Activated naive CD4-positive, alpha-beta T cell treated with anti-CD3 and anti-CD28 coated beads for 36 hours (primary cell): ENCODE measurements at regions of chr4 and their contacts with region 1.

Region 1: DNA sequence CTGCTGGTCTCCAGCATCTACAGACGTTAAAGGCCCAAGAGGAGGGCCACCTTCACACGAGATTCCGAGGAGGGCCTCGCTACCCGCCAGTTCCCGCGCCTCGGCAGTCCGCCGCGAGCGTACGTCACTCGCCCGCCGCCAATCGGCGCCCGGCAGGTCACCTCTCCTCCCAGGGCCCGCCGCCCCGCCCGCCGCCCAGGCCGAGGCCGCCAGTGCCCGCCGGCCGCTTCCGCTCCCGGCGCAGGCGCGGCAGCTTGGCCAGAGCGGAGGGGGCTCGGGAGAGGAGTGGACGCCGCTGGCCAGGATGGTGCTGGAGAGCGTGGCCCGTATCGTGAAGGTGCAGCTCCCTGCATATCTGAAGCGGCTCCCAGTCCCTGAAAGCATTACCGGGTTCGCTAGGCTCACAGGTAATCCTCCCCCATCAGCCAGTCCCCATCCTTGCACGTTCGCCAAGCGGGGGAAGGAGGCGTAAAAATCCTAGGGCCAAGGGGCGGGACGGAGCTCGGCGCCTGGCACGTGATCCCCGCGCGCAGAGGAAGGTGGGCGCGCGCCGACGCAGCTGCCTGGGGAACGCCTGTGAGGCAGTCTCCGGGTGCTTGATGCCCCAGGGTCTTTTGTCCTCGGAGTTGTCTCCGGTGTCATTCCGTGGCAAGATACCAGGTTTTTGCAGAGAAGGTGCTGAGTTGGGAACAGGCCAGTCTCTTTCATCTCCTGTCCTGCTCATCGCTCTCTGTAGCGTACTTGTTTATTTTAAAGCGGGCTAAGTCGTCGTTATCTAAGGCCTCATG is at the start of gene CISD2:
- DNase-seq: peak; percentile 95
- H3K4me3 Mint-ChIP-seq: peak within 1 kb of the TSS; percentile 94
- H3K27ac Mint-ChIP-seq: peak within 1 kb of the TSS; percentile 97
- H3K4me1 Mint-ChIP-seq: peaks cover 51% of the 10 kb centered on the region
- H3K27me3 Mint-ChIP-seq: no peaks in the 10 kb centered on the region
- total RNA-seq, gene CISD2: 25.1 to 25.7 TPM

Region 2: GRCh38 chr4:102627831-102628523 is 241.0 kb before region 1 on chr4:
- CTCF ChIA-PET with region 1: no interaction called
- intact Hi-C with region 1: loop called (anchors 2 kb)
- DNase-seq: peak; percentile 62
- H3K4me3 Mint-ChIP-seq: peak overlapping the region; percentile 22
- H3K27ac Mint-ChIP-seq: peak overlapping the region; percentile 54
- H3K4me1 Mint-ChIP-seq: peaks cover 75% of the 10 kb centered on the region
- H3K27me3 Mint-ChIP-seq: no peaks in the 10 kb centered on the region

Region 3: DNA sequence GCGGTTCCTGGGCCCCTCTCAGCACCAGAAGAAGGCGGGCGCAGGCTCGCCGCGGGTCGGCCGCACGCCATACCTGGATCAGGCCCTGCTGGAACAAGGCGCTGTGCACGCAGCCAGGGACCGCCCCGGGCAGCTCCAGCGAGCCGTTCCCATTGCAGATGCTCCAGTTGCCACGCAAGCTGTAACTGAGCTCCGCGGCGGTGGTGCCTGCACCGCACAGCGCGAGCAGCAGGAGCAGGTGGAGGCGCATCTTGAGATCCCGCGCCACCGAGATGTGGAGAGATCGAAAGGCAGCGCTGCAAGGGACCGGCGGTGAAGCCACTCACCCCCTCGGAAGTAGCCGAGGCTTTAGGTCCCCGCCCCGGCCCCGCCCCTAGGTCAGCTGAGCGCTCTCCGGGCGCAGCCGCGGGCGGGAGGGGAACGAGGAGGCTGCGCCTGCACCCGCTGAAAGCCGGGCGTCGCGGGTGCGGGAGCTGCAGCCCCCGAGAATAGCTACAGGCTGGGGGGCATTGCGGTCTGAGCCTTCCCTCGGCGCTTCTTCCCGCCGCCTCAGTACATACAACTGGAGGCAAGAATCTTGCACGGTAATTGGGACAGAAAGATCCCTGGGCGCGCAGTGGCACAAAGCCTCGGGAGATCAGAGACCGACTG is 108.2 kb before region 1 on chr4 and contains the start of gene MANBA:
- CTCF ChIA-PET with region 1: no interaction called
- intact Hi-C with region 1: loop called (anchors 1 kb)
- DNase-seq: peak; percentile 89
- H3K4me3 Mint-ChIP-seq: peak within 1 kb of the TSS; percentile 88
- H3K27ac Mint-ChIP-seq: peak within 1 kb of the TSS; percentile 36
- H3K4me1 Mint-ChIP-seq: peaks cover 27% of the 10 kb centered on the region
- H3K27me3 Mint-ChIP-seq: no peaks in the 10 kb centered on the region
- total RNA-seq, gene MANBA: 9.8 to 11.0 TPM

Region 4: GRCh38 chr4:102988429-102989020 is 119.5 kb after region 1 on chr4:
- CTCF ChIA-PET with region 1: no interaction called
- intact Hi-C with region 1: loop called (anchors 1 kb)
- DNase-seq: no peak
- H3K4me3 Mint-ChIP-seq: peak overlapping the region; percentile 4
- H3K27ac Mint-ChIP-seq: peak overlapping the region; percentile 65
- H3K4me1 Mint-ChIP-seq: peaks cover 21% of the 10 kb centered on the region
- H3K27me3 Mint-ChIP-seq: no peaks in the 10 kb centered on the region

Region 5: GRCh38 chr4:103019308-103020124 is 150.5 kb after region 1 on chr4 and contains the start of gene SLC9B1:
- CTCF ChIA-PET with region 1: no interaction called
- intact Hi-C with region 1: loop called (anchors 1 kb)
- DNase-seq: peak; percentile 96
- H3K4me3 Mint-ChIP-seq: peak within 1 kb of the TSS; percentile 96
- H3K27ac Mint-ChIP-seq: peak within 1 kb of the TSS; percentile 97
- H3K4me1 Mint-ChIP-seq: peaks cover 20% of the 10 kb centered on the region
- H3K27me3 Mint-ChIP-seq: no peaks in the 10 kb centered on the region
- total RNA-seq, gene SLC9B1: 2.0 to 3.5 TPM

Region 6: DNA sequence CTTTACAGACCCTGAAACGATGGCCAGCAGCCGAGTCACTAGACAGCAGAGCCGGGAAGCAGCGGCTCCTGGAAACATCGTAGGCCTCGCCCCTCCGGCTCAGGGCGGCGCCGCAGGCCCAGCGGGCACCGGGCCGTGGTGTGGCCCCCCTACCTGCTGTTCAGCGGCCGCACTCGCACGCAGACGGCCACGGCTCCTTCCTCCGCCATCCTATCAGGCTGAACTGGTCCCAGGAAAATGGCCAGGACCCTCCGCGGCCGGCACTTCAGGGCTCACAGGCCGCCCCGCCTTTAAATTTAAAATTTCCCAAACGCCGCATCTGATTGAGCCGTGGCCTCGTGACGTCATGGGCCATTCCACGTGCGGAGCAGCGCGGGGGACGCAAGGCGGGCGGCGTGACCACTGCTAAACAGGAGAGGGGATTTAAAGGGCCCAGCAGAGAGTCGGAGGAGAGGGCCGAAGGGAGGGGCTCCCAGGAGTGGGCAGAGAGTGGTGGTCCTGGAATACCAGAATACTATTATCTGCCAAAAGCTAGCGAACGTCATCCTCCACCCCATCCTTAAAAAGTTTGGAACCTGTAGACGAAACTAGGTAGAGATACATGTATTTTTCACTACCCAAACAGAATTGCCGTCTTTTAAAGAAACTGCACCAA is 329.3 kb after region 1 on chr4 and contains the start of gene CENPE:
- CTCF ChIA-PET with region 1: no interaction called
- intact Hi-C with region 1: loop called (anchors 2 kb)
- DNase-seq: peak; percentile 89
- H3K4me3 Mint-ChIP-seq: peak within 1 kb of the TSS; percentile 87
- H3K27ac Mint-ChIP-seq: peak within 1 kb of the TSS; percentile 89
- H3K4me1 Mint-ChIP-seq: peaks cover 7% of the 10 kb centered on the region
- H3K27me3 Mint-ChIP-seq: peaks cover 3% of the 10 kb centered on the region
- total RNA-seq, gene CENPE: 38.1 to 45.2 TPM